Gastrocnemius medialis (tissue), 4 donors: ENCODE measurements at regions of chr11 and their contacts with region 1.

Region 1: GRCh38 chr11:97574976-97575665 is 1185.3 kb downstream of the JRKL start:
- DNase-seq: no peak
- ATAC-seq: no peak
- H3K4me3 ChIP-seq: no peak overlapping the region
- H3K27ac ChIP-seq: no peak overlapping the region
- H3K4me1 ChIP-seq: no peaks in the 10 kb centered on the region
- H3K27me3 ChIP-seq: no peaks in the 10 kb centered on the region
- CTCF ChIP-seq: no peak
- POLR2A ChIP-seq: no peak

Region 2: DNA sequence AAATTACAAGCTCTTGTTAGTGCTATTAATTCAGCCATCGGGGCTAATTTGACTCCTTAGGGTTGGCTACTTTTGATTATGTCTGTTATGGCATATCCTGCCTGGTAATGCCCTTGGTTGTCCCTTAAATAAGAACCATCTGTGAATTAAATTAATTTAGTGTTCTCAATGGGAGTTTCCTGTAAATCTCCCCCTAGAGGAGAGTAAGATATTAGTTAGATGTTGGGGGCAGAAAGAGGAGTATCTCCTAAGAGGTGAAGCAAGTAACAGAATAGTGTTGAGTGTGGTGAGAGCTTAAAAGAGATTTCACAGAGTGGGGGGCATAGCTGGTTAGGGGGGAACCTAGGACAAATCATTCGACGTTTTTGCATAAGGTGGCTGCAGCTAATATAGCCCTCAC is 58.4 kb before region 1 on chr11:
- in situ Hi-C with region 1: loop called in 1 of 4 experiments (anchors 10 kb)
- intact Hi-C with region 1: no loop called
- DNase-seq: no peak
- ATAC-seq: no peak
- H3K4me3 ChIP-seq: no peak overlapping the region
- H3K27ac ChIP-seq: no peak overlapping the region
- H3K4me1 ChIP-seq: no peaks in the 10 kb centered on the region
- H3K27me3 ChIP-seq: no peaks in the 10 kb centered on the region
- CTCF ChIP-seq: no peak
- POLR2A ChIP-seq: no peak

Region 3: DNA sequence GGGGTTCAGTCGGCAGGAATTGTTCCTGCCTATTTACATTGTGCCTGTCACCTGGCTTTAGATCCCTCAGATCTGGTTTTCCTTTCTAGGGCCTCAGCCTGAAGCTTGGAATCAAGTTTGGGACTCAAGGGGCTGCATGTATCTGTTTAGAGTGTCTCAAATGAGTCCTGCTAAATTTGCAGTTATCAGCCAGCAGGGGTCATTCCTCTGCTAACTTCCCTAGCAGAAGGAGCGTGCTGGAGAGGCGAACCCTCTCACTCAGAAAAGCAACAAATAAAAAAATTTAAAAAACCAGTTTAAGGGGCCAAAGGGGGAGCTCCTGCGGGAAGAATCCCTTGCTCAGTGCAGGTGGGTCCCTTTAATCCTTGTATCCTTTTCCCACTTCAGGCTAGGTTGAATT is 34.9 kb after region 1 on chr11:
- in situ Hi-C with region 1: no loop called
- intact Hi-C with region 1: no loop called
- DNase-seq: no peak
- ATAC-seq: no peak
- H3K4me3 ChIP-seq: no peak overlapping the region
- H3K27ac ChIP-seq: no peak overlapping the region
- H3K4me1 ChIP-seq: no peaks in the 10 kb centered on the region
- H3K27me3 ChIP-seq: no peaks in the 10 kb centered on the region
- CTCF ChIP-seq: no peak
- POLR2A ChIP-seq: no peak